Mammary epithelial cell (primary cell): ENCODE measurements at regions of chr2 and their contacts with region 1.

Region 1: DNA sequence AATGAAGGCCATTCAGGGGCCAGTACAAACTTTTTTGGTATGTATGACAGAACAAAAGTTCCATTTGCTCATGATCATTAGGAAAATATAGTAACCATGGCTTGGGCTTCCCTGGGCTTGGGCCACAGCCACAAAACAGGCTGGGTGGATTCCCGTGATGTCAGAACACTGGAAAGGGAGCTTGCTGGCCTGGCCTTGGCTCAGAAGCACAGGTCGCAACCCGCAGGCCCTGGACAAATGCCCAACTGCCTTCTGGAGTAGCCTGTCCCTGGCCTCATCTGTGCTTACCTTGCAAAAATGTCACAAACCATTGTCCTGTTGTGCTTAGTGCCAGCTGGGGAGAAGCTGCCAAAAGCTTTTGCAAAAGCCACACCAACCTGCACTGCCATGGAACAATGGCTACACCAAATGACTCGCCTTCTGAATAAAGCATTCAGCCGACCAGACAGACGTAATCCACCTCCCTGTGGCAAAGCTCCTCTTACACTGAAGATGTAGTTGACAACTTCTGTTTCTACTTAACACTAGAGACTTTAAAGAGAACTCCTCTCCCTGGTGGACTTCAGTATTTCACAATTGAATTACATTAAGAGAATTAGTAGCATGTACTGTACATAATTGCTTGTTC is 125.5 kb downstream of the ANKRD44 start:
- DNase-seq: peak; percentile 32
- H3K4me3 ChIP-seq: no peak overlapping the region
- H3K27ac ChIP-seq: no peak overlapping the region
- H3K4me1 ChIP-seq: no peaks in the 10 kb centered on the region
- H3K27me3 ChIP-seq: no peaks in the 10 kb centered on the region
- CTCF ChIP-seq: no peak

Region 2: DNA sequence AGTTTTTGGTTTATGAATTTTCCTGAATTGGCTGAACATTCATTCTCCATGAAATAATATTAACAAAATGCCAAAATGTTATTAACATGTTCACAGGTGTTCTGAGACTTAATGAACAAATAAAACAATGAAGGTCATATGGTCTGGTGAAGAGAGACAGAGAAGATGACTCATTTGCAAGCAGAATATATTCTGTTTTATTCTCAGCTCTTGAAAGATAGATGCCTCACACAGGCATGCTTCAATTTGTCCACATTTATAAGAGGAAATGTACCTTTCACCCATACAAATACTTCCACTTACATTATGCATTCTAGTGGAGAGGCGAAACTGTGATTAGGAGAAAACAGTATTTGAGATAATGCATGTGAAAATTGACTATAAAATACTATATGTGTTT is 183.2 kb before region 1 on chr2:
- CTCF ChIA-PET with region 1: no interaction called
- dilution Hi-C with region 1: no loop called
- in situ Hi-C with region 1: no loop called
- intact Hi-C with region 1: no loop called
- DNase-seq: peak; percentile 18
- H3K4me3 ChIP-seq: no peak overlapping the region
- H3K27ac ChIP-seq: no peak overlapping the region
- H3K4me1 ChIP-seq: no peaks in the 10 kb centered on the region
- H3K27me3 ChIP-seq: no peaks in the 10 kb centered on the region
- CTCF ChIP-seq: no peak

Region 3: DNA sequence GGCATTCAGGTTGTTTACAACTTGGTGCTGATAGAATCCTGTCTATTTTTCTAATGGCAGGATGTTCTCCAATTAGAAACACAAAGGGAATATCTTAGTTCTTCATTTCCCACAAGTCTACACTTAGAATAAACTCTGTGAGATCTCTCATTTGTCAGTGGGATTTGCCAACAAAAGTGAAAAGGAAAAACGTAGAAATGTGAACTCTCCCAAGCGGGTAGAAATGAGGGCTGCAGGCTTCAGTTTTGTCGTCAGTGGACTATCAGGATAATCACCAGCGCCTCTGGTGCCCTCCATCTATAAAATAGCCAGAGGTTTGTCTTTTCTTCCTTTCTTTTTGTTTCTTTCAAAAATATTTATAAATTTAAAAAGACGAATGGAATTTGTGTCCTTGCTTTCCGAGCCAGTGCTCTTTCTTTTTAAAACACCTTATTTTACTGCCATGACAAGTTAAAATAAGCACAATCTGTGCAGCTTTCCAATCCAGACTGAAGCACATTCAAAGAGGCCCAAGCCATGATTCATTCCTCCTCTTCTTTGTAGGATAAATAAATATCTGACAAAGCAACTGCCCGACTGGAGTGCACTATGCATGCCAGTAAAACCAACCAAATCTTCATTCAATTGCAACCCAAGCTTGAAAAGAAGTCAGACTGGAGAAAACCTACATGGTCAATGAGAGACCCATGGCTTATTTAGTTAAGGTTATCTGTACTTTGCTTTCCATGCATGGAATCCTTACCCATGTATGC is 60.3 kb before region 1 on chr2:
- CTCF ChIA-PET with region 1: no interaction called
- dilution Hi-C with region 1: loop called (anchors 5 kb)
- in situ Hi-C with region 1: no loop called
- intact Hi-C with region 1: no loop called
- DNase-seq: no peak
- H3K4me3 ChIP-seq: no peak overlapping the region
- H3K27ac ChIP-seq: no peak overlapping the region
- H3K4me1 ChIP-seq: no peaks in the 10 kb centered on the region
- H3K27me3 ChIP-seq: no peaks in the 10 kb centered on the region
- CTCF ChIP-seq: no peak